ENCODE measurements at regions of chr18 and their contacts with region 1.

Region 1: GRCh38 chr18:14026199-14026598 is 106.0 kb downstream of the ZNF519 start:
- DNase-seq: no peak
- ATAC-seq: no peak
- H3K4me3 ChIP-seq: no peak overlapping the region
- H3K27ac ChIP-seq: no peak overlapping the region
- H3K4me1 ChIP-seq: no peaks in the 10 kb centered on the region
- H3K27me3 ChIP-seq: peaks cover 52% of the 10 kb centered on the region
- CTCF ChIP-seq: no peak
- POLR2A ChIP-seq: no peak
- RAD21 ChIP-seq: no peak

Region 2: DNA sequence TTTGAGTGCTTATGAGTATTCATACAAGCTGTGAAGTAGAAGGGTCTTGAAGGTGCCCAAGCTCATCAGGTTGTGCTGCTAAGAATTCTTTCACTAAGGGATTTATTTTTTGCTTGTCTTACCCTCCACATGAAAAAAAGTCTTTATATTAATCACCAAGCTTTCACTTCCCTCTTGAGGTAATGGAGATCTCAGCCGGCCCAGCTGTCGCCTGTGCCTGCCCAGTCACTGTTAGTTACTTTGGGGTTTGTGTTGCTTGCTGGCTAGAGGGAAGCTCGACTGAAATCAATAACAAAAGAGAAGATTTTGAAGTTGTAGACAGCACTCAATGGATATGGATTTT is 132.8 kb before region 1 on chr18:
- CTCF ChIA-PET with region 1: no interaction called
- POLR2A ChIA-PET with region 1: no interaction called
- RAD21 ChIA-PET with region 1: no interaction called
- intact Hi-C with region 1: loop called (anchors 10 kb)
- DNase-seq: no peak
- ATAC-seq: no peak
- H3K4me3 ChIP-seq: no peak overlapping the region
- H3K27ac ChIP-seq: no peak overlapping the region
- H3K4me1 ChIP-seq: no peaks in the 10 kb centered on the region
- H3K27me3 ChIP-seq: no peaks in the 10 kb centered on the region
- CTCF ChIP-seq: no peak
- POLR2A ChIP-seq: no peak
- RAD21 ChIP-seq: no peak

Region 3: DNA sequence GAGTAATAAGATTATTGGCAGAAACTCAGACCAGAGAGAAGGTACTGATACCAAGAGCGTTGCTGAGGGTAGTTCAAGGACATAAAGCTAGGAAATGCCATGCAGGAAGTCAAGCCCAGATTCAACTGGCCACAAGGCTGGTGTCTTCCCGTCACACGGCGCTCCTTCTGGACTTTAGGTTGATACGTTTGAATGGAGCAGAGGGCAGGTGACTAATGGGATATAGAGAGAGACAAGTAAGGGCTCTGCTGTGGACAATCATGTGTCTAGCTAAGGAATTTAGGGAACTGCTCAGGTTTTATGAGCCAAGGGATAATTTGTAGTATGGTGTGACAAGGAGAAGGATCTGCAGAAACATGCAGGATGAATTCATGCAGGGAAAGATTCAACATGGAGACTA is 27.0 kb before region 1 on chr18:
- CTCF ChIA-PET with region 1: no interaction called
- POLR2A ChIA-PET with region 1: no interaction called
- RAD21 ChIA-PET with region 1: no interaction called
- intact Hi-C with region 1: loop called (anchors 2 kb)
- DNase-seq: no peak
- ATAC-seq: no peak
- H3K4me3 ChIP-seq: no peak overlapping the region
- H3K27ac ChIP-seq: no peak overlapping the region
- H3K4me1 ChIP-seq: no peaks in the 10 kb centered on the region
- H3K27me3 ChIP-seq: no peaks in the 10 kb centered on the region
- CTCF ChIP-seq: no peak
- POLR2A ChIP-seq: no peak
- RAD21 ChIP-seq: no peak

Measured in HCT116 (cell line).